ENCODE measurements at regions of chr13 and their contacts with region 1.

Region 1: DNA sequence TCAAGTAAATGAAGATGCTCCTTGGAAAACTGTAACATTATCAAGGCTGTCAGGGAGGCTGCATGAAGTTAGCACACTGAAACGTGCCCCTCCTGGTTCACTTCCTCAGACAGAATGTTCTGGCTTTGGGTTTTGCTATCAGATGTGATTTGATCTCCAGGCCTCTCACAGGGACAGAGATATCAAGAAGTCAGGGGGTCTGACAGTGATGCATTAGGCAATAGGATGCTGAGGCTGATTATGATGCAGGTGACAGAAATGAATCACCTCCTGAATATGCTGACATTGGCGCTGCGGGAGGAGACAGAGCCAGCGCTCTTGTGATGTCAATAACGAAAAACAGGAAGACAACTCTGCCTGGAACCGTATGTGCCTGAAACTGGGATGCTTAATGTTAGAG is 278.5 kb downstream of the DCT start:
- DNase-seq: no peak

Region 2: DNA sequence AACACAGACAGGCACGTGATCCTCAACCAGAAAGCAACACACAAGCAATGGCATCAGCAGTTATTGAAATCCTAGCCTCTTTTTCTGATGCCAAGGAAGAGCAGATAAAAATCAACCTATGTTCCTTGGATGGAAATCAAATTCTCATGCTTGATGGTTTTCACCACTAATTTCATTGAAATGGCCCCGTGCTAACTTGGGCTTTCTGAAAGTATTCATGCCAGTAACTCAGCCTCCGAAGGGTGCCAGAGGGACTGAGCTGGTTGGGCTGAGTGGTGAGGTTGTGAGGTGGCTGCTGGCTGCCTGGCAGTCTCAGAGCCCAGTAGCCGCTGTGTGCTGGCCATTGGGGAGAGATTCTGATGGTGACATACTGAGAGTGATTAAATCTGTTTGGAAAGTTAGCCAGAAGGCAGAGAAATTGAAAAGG is 30.9 kb before region 1 on chr13:
- intact Hi-C with region 1: loop called in 1 of 2 experiments (anchors 1 kb)
- DNase-seq: peak; percentile 84

Region 3: GRCh38 chr13:94327318-94327717 is 126.3 kb after region 1 on chr13:
- intact Hi-C with region 1: no loop called
- DNase-seq: no peak